Activated CD4-positive, alpha-beta memory T cell treated with anti-CD3 and anti-CD28 coated beads for 36 hours (primary cell): ENCODE measurements at regions of chr11 and their contacts with region 1.

Region 1: DNA sequence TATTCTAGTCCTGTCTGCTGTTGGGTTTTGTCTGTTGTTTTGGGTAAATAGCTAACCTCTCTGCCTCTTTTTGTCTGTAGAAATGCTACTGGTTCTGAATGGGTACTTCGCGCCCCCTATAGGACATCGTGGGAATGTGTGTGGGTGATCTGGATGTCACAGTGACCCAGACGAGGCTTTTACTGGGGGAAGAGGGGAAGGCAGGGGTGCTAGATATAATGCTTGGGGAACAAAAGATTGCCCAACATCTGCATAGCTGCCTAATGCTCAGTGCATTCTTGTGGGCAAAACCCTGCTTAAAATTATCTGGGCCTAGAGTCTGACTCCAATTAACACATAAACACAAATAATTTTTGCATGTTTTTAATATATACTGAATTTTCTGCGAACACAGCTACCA is 57.7 kb downstream of the BMAL1 start:
- DNase-seq: peak; percentile 83
- H3K4me3 Mint-ChIP-seq: no peak overlapping the region
- H3K27ac Mint-ChIP-seq: no peak overlapping the region
- H3K4me1 Mint-ChIP-seq: peaks cover 77% of the 10 kb centered on the region
- H3K27me3 Mint-ChIP-seq: no peaks in the 10 kb centered on the region

Region 2: GRCh38 chr11:12963792-12964536 is 371.4 kb before region 1 on chr11:
- CTCF ChIA-PET with region 1: interaction called, 16 read pairs
- POLR2A ChIA-PET with region 1: no interaction called
- intact Hi-C with region 1: no loop called
- DNase-seq: peak; percentile 73
- H3K4me3 Mint-ChIP-seq: no peak overlapping the region
- H3K27ac Mint-ChIP-seq: no peak overlapping the region
- H3K4me1 Mint-ChIP-seq: no peaks in the 10 kb centered on the region
- H3K27me3 Mint-ChIP-seq: peaks cover 20% of the 10 kb centered on the region

Region 3: GRCh38 chr11:13238879-13239514 is 96.3 kb before region 1 on chr11:
- CTCF ChIA-PET with region 1: interaction called, 13 read pairs
- POLR2A ChIA-PET with region 1: no interaction called
- intact Hi-C with region 1: no loop called
- DNase-seq: peak; percentile 55
- H3K4me3 Mint-ChIP-seq: no peak overlapping the region
- H3K27ac Mint-ChIP-seq: no peak overlapping the region
- H3K4me1 Mint-ChIP-seq: no peaks in the 10 kb centered on the region
- H3K27me3 Mint-ChIP-seq: peaks cover 14% of the 10 kb centered on the region

Region 4: DNA sequence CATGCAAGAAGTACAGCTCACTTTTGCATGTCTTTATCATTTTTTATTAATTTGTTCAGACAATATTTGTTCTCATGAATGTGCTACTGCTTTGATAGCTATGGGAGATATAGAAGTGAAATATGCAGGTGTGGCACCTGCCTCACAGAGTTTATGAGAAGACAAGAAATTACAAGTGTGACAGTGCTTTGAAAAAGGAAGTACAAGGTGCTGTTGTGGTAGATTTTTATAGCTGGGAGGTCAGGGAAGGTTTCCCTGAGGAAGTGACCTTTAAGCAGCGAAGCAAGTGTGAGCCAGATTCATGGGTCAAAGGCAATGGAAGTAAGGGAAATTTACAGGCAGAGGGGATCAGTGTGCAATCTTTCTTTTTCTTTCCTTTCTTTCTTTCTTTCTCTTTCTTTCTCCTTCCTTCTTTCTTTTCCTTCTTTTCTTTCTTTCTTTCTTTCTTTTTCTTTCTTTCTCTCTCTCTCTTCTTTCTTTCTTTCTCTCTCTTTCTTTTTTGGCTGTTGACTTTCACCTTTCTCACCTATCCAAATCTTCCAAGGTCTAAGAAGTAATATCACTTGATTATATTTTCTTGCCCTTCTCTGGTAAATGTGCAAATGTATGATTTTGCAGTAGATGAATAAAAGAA is 64.1 kb before region 1 on chr11:
- CTCF ChIA-PET with region 1: interaction called, 12 read pairs
- POLR2A ChIA-PET with region 1: no interaction called
- intact Hi-C with region 1: no loop called
- DNase-seq: no peak
- H3K4me3 Mint-ChIP-seq: no peak overlapping the region
- H3K27ac Mint-ChIP-seq: no peak overlapping the region
- H3K4me1 Mint-ChIP-seq: peaks cover 6% of the 10 kb centered on the region
- H3K27me3 Mint-ChIP-seq: peaks cover 20% of the 10 kb centered on the region

Region 5: GRCh38 chr11:13297917-13298356 is 37.4 kb before region 1 on chr11:
- CTCF ChIA-PET with region 1: interaction called, 17 read pairs
- POLR2A ChIA-PET with region 1: no interaction called
- intact Hi-C with region 1: no loop called
- DNase-seq: peak; percentile 70
- H3K4me3 Mint-ChIP-seq: no peak overlapping the region
- H3K27ac Mint-ChIP-seq: peak overlapping the region; percentile 55
- H3K4me1 Mint-ChIP-seq: peaks cover 82% of the 10 kb centered on the region
- H3K27me3 Mint-ChIP-seq: no peaks in the 10 kb centered on the region

Region 6: GRCh38 chr11:13462901-13463778 is 127.8 kb after region 1 on chr11 and contains the start of gene BTBD10:
- CTCF ChIA-PET with region 1: interaction called, 3 read pairs
- POLR2A ChIA-PET with region 1: no interaction called
- intact Hi-C with region 1: loop called (anchors 1 kb)
- DNase-seq: peak; percentile 95
- H3K4me3 Mint-ChIP-seq: peak within 1 kb of the TSS; percentile 98
- H3K27ac Mint-ChIP-seq: peak within 1 kb of the TSS; percentile 95
- H3K4me1 Mint-ChIP-seq: peaks cover 35% of the 10 kb centered on the region
- H3K27me3 Mint-ChIP-seq: no peaks in the 10 kb centered on the region
- total RNA-seq, gene BTBD10: 22.3 to 24.3 TPM